ENCODE measurements at regions of chr4 and their contacts with region 1.

Region 1: GRCh38 chr4:54322818-54323417 is 93.8 kb downstream of the PDGFRA start:
- DNase-seq: peak; percentile 86
- ATAC-seq: peak; percentile 90
- H3K4me3 Mint-ChIP-seq: no peak overlapping the region
- H3K27ac Mint-ChIP-seq: no peak overlapping the region
- H3K4me1 Mint-ChIP-seq: peaks cover 4% of the 10 kb centered on the region; the same call in 1 of the 2 replicates
- H3K27me3 Mint-ChIP-seq: peaks cover 3% of the 10 kb centered on the region; the same call in 1 of the 2 replicates
- CTCF ChIP-seq: peak; percentile 40

Region 2: GRCh38 chr4:54308110-54308509 is 14.8 kb before region 1 on chr4:
- CTCF ChIA-PET with region 1: interaction called, 13 read pairs
- POLR2A ChIA-PET with region 1: no interaction called
- DNase-seq: no peak
- ATAC-seq: no peak
- H3K4me3 Mint-ChIP-seq: no peak overlapping the region
- H3K27ac Mint-ChIP-seq: no peak overlapping the region
- H3K4me1 Mint-ChIP-seq: no peaks in the 10 kb centered on the region
- H3K27me3 Mint-ChIP-seq: no peaks in the 10 kb centered on the region; the same call in 1 of the 2 replicates
- CTCF ChIP-seq: no peak

Region 3: DNA sequence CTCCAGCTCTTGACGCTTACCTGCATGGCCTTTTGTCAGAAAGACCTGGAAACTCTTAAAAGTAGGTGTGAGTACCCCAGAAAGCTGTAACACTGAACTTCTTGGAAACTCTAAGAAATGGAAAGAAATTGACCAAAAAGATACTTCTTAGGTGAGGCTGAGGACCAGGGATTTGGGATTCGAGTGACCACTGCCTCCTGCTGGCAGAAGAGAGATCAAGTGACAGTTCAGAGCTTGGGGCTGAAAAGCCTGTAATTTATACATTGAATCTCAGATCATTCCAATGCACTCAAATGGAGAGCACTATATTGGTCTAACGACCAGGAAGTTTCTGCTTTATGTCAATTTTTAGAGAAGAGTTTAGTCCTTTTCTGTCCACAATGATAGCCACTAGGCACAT is 110.8 kb after region 1 on chr4:
- CTCF ChIA-PET with region 1: interaction called, 19 read pairs
- POLR2A ChIA-PET with region 1: no interaction called
- DNase-seq: peak; percentile 36
- ATAC-seq: peak; percentile 71
- H3K4me3 Mint-ChIP-seq: no peak overlapping the region
- H3K27ac Mint-ChIP-seq: no peak overlapping the region
- H3K4me1 Mint-ChIP-seq: no peaks in the 10 kb centered on the region
- H3K27me3 Mint-ChIP-seq: no peaks in the 10 kb centered on the region
- CTCF ChIP-seq: peak; percentile 44

Region 4: DNA sequence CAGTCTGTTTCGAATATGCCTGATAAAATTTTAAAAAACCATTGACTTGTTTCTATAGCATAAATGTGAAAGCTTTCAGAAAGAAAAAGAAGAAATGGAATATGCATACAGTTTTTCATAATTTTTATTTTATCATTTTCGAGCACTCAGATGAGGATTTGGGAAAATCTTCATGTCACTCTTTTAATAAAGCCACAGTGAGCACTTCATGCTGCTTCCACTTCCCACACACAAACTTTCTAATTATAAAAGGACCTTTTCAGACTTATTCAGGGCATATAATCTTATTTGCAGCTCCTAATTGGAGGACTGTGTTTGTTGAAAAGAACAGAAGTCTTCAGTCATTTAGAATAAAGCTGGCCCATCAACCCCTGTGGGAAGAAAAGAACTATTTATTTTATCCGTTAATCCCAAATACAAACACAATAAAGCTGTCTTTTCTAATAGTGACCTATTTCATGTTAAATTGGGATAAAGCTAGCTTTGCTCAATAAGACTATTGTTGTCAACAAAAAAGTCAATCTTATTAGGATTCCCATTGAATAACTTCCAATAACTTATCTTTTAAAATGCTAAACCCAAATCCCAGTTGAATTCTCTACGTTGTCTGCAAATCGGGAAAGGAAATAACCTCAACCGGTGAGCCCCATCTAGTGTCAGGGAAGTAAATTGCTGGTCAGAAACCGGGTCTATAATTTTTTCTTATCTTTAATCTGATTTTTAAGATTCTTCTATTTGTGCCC is 117.6 kb after region 1 on chr4:
- CTCF ChIA-PET with region 1: interaction called, 18 read pairs
- POLR2A ChIA-PET with region 1: no interaction called
- DNase-seq: peak; percentile 22
- ATAC-seq: no peak; the same call in 1 of the 2 replicates
- H3K4me3 Mint-ChIP-seq: no peak overlapping the region
- H3K27ac Mint-ChIP-seq: no peak overlapping the region
- H3K4me1 Mint-ChIP-seq: no peaks in the 10 kb centered on the region
- H3K27me3 Mint-ChIP-seq: no peaks in the 10 kb centered on the region
- CTCF ChIP-seq: peak; percentile 26

Region 5: GRCh38 chr4:54513204-54513603 is 190.3 kb after region 1 on chr4:
- CTCF ChIA-PET with region 1: no interaction called
- POLR2A ChIA-PET with region 1: no interaction called
- DNase-seq: no peak
- ATAC-seq: no peak
- H3K4me3 Mint-ChIP-seq: no peak overlapping the region
- H3K27ac Mint-ChIP-seq: no peak overlapping the region
- H3K4me1 Mint-ChIP-seq: peaks cover 22% of the 10 kb centered on the region
- H3K27me3 Mint-ChIP-seq: no peaks in the 10 kb centered on the region
- CTCF ChIP-seq: no peak

Measured in WTC11 (cell line).